ENCODE measurements at regions of chr6 and their contacts with region 1.

Region 1: GRCh38 chr6:29649701-29650673 is 6.9 kb upstream of the MOG start:
- DNase-seq: peak; percentile 94 to 99
- H3K4me3 ChIP-seq: peak overlapping the region; percentile 29 to 66 (median 56); a peak in 7 of 8 replicates
- H3K27ac ChIP-seq: peak overlapping the region; percentile 69; the same call in 1 of the 2 replicates
- H3K4me1 ChIP-seq: peaks cover 3 to 17% (median 10%) of the 10 kb centered on the region in 4 experiments; a peak in 6 of 7 replicates
- H3K27me3 ChIP-seq: no peaks in the 10 kb centered on the region
- CTCF ChIP-seq: peak; percentile 69 to 94 (median 74)
- EP300 ChIP-seq: no peak
- POLR2A ChIP-seq: peak in 1 of 2 experiments; percentile 93; a peak in 2 of 3 replicates
- RAD21 ChIP-seq: peak; percentile 52 to 53

Region 2: DNA sequence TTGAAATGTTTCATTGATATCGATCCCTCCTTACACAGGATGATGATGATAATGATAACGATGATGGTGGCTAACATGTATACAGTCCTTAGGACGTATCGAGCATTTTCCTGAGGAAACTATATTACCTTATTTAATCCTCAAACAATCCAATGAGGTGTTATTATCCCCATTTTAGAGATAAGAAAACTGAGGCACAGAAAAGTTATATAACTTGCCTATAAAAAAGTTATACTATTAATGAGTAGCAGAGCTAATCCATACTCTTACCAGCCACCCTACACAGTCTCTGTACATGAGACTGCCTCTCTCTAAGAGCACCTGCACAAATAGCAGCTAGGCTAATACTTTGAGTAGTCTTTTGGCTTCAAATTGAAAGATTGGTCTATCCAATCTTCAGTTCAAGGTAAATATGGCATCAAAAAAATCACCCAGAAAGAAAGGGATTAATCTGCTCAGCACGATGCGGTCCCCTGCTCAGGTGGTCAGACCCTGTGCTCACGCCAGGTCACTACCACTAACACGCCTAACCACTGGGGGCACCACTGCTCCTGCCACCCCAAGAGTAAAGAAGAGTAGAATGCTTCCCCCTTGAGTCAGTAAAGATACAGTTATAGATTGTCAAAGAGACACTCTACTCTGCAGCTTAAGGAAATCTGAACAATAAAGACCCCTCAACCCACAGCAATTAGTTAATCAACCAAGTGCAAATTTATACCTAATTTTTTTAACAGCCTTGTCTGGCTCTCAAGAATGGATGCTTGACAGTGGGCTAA is 32.0 kb before region 1 on chr6:
- CTCF ChIA-PET with region 1: interaction called, 658 read pairs
- POLR2A ChIA-PET with region 1: no interaction called
- DNase-seq: no peak
- H3K4me3 ChIP-seq: no peak overlapping the region
- H3K27ac ChIP-seq: no peak overlapping the region
- H3K4me1 ChIP-seq: no peaks in the 10 kb centered on the region; a peak in 2 of 7 replicates
- H3K27me3 ChIP-seq: no peaks in the 10 kb centered on the region
- CTCF ChIP-seq: peak; percentile 87 to 97 (median 90)
- EP300 ChIP-seq: no peak
- POLR2A ChIP-seq: no peak
- RAD21 ChIP-seq: peak; percentile 52 to 59

Region 3: DNA sequence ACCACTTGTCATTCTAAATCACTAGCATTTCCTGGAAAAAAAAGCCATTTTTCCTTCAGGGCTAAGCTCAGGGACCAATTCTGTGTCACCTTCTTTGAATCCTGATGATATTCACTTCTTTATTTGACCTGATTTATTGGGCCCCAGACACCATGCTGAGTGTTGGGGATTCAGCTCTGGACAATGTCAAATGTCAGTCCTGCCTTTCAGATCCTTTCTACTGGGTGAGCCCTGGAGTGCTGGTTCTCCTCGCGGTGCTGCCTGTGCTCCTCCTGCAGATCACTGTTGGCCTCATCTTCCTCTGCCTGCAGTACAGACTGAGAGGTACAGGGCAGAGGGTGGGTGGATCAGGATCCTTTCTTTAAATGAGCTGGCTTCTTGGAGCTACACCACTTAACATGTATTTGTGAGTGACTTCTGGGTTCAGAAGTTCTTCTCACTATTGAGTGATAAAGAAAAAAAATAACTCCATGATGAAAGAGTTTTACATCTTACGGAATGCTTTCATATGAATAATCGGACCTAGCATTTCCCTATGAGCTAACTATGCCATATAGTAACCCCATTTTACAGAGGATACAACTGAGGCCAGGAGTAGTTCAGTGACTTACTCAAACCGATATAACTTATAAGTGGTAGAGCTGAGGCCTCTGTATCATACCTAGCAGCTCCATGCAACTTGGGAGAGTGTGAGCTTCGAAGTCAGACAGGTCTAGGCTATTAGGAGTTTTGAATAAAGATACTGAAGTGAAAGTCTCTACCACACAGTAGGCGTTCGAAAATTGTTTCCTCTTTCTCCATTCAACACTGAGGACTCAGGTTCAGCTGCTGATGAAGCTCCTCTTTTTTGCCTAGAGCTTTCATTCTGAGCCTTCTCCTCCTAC is 16.2 kb after region 1 on chr6:
- CTCF ChIA-PET with region 1: interaction called, 658 read pairs
- POLR2A ChIA-PET with region 1: interaction called, 78 read pairs
- DNase-seq: no peak
- H3K4me3 ChIP-seq: peak overlapping the region in 2 of 4 experiments; percentile 1 to 3; a peak in 2 of 8 replicates
- H3K27ac ChIP-seq: peak overlapping the region; percentile 78
- H3K4me1 ChIP-seq: peaks cover 5 to 32% (median 24%) of the 10 kb centered on the region in 4 experiments; a peak in 6 of 7 replicates
- H3K27me3 ChIP-seq: no peaks in the 10 kb centered on the region
- CTCF ChIP-seq: no peak
- EP300 ChIP-seq: no peak
- POLR2A ChIP-seq: no peak
- RAD21 ChIP-seq: no peak

Region 4: DNA sequence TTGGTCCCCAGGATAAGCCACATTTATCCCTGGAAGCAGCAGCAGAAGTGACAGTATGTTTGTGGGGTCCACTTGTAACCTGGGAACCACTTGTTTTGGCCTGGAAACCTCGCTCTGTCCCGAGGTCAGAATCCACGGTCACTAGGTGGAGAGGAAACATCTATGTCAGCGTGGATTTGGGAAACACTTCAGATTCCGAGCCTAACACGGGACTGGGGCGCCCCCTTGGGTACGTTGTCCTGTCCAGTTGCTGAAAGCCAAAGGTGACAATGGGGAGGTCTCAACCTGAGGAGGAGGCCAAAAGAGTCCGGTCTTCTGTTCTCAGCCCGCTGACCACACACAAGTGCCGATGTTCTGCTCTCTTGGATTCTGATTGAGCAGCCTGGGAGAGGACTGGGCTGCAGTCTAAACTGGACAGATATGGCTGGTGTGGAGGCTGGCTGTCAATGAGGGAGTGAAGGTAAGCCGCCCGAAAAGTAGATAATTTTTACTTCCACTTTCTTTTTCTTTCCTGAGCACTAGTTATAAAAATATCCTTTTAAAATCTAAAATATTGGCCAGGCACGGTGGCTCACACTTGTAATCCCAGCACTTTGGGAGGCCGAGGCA is 35.8 kb after region 1 on chr6:
- CTCF ChIA-PET with region 1: interaction called, 523 read pairs
- POLR2A ChIA-PET with region 1: interaction called, 4 read pairs
- DNase-seq: peak in 1 of 2 experiments; percentile 88
- H3K4me3 ChIP-seq: no peak overlapping the region
- H3K27ac ChIP-seq: no peak overlapping the region
- H3K4me1 ChIP-seq: peaks cover 0 to 8% (median 0%) of the 10 kb centered on the region in 4 experiments; a peak in 4 of 7 replicates
- H3K27me3 ChIP-seq: no peaks in the 10 kb centered on the region
- CTCF ChIP-seq: peak; percentile 80 to 89 (median 85)
- EP300 ChIP-seq: no peak
- POLR2A ChIP-seq: no peak
- RAD21 ChIP-seq: peak; percentile 93 to 97

Region 5: DNA sequence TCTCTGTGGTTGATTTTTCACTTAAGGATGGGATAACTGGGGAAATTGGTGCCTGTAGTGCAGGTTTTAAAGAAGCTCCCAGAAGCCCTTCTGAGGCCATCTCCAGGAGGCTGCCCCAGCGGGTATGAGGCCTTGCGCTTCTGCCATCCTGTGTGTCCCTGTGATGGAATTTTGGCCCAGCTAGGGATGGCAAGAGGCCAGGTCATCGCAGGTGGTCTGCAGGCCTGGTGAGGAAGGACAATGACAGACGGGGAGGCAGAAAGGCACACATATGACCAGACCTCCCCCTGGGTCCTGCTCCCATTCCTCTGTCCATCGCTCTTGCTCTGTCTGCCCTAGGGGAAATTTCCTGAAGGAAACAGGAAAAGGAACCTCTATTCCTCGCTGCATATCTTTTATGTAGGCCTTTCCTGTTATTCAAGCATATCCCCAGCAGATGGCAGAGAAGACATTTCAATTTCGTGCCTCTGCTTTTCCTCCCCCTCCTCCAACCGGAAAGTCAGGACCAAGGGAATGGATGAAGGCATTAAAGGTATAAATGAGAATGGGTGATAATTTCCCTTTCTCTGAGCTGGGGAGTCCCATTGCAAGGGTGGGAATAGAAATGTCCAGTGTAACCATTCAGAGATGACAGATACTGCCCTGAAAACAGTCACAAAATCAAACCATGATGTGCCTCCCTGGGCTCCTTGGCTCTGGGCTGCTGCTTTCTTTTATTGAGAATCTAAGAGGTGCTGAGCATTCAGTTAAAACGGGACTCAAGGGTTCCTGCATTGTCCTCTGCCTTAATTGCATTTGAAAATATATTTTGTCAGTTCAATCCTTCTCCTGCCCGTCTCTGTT is 55.6 kb after region 1 on chr6:
- CTCF ChIA-PET with region 1: interaction called, 523 read pairs
- POLR2A ChIA-PET with region 1: no interaction called
- DNase-seq: peak in 1 of 2 experiments; percentile 52
- H3K4me3 ChIP-seq: no peak overlapping the region
- H3K27ac ChIP-seq: no peak overlapping the region
- H3K4me1 ChIP-seq: no peaks in the 10 kb centered on the region; a peak in 1 of 7 replicates
- H3K27me3 ChIP-seq: no peaks in the 10 kb centered on the region
- CTCF ChIP-seq: peak in 2 of 3 experiments; percentile 65 to 72; a peak in 3 of 4 replicates
- EP300 ChIP-seq: no peak
- POLR2A ChIP-seq: no peak
- RAD21 ChIP-seq: peak; percentile 87 to 89